ENCODE measurements at regions of chr7 and their contacts with region 1.

Region 1: GRCh38 chr7:76020031-76020714 is 25.8 kb upstream of the TMEM120A start:
- DNase-seq: peak; percentile 80
- ATAC-seq: peak; percentile 86
- H3K4me3 Mint-ChIP-seq: no peak overlapping the region
- H3K27ac Mint-ChIP-seq: no peak overlapping the region
- H3K4me1 Mint-ChIP-seq: peaks cover 8% of the 10 kb centered on the region
- H3K27me3 Mint-ChIP-seq: no peaks in the 10 kb centered on the region
- CTCF ChIP-seq: peak; percentile 98

Region 2: GRCh38 chr7:75762314-75762917 is 257.8 kb before region 1 on chr7:
- CTCF ChIA-PET with region 1: interaction called, 13 read pairs
- POLR2A ChIA-PET with region 1: no interaction called
- intact Hi-C with region 1: no loop called
- DNase-seq: no peak
- ATAC-seq: peak; percentile 85
- H3K4me3 Mint-ChIP-seq: no peak overlapping the region
- H3K27ac Mint-ChIP-seq: no peak overlapping the region
- H3K4me1 Mint-ChIP-seq: no peaks in the 10 kb centered on the region
- H3K27me3 Mint-ChIP-seq: no peaks in the 10 kb centered on the region
- CTCF ChIP-seq: peak; percentile 61

Region 3: GRCh38 chr7:75872073-75872782 is 147.9 kb before region 1 on chr7:
- CTCF ChIA-PET with region 1: interaction called, 80 read pairs
- POLR2A ChIA-PET with region 1: no interaction called
- intact Hi-C with region 1: loop called (anchors 2 kb)
- DNase-seq: no peak
- ATAC-seq: no peak
- H3K4me3 Mint-ChIP-seq: no peak overlapping the region
- H3K27ac Mint-ChIP-seq: no peak overlapping the region
- H3K4me1 Mint-ChIP-seq: peaks cover 23% of the 10 kb centered on the region
- H3K27me3 Mint-ChIP-seq: no peaks in the 10 kb centered on the region
- CTCF ChIP-seq: no peak

Region 4: DNA sequence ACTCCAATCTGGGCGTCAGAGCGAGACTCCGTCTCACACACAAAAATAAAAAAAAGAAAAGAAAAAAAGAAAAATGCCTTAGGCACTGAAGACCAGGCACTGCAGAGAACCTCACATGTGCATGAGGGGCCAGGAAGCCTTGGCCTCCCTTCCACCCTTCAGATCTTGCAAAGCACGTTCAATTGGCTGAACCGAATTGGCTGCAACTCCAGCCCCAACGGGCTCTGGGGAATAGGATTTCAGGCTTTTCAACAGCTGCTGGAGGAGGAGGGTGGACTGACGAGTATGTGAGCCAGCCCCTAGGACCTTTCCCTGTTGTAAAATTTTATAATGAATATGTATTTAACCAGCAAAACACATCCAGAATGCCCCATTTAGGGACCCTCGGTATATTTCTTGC is 42.4 kb before region 1 on chr7:
- CTCF ChIA-PET with region 1: interaction called, 14 read pairs
- POLR2A ChIA-PET with region 1: no interaction called
- intact Hi-C with region 1: no loop called
- DNase-seq: no peak
- ATAC-seq: no peak
- H3K4me3 Mint-ChIP-seq: no peak overlapping the region
- H3K27ac Mint-ChIP-seq: no peak overlapping the region
- H3K4me1 Mint-ChIP-seq: no peaks in the 10 kb centered on the region
- H3K27me3 Mint-ChIP-seq: no peaks in the 10 kb centered on the region
- CTCF ChIP-seq: no peak

Region 5: GRCh38 chr7:76031964-76032363 is 11.8 kb after region 1 on chr7:
- CTCF ChIA-PET with region 1: interaction called, 12 read pairs
- POLR2A ChIA-PET with region 1: interaction called, 4 read pairs
- intact Hi-C with region 1: no loop called
- DNase-seq: no peak
- ATAC-seq: no peak
- H3K4me3 Mint-ChIP-seq: no peak overlapping the region
- H3K27ac Mint-ChIP-seq: no peak overlapping the region
- H3K4me1 Mint-ChIP-seq: peaks cover 5% of the 10 kb centered on the region
- H3K27me3 Mint-ChIP-seq: no peaks in the 10 kb centered on the region
- CTCF ChIP-seq: no peak

Measured in activated CD8-positive, alpha-beta T cell treated with anti-CD3 and anti-CD28 coated beads for 36 hours (primary cell).